H1 (cell line): ENCODE measurements at regions of chr7 and their contacts with region 1.

Region 1: DNA sequence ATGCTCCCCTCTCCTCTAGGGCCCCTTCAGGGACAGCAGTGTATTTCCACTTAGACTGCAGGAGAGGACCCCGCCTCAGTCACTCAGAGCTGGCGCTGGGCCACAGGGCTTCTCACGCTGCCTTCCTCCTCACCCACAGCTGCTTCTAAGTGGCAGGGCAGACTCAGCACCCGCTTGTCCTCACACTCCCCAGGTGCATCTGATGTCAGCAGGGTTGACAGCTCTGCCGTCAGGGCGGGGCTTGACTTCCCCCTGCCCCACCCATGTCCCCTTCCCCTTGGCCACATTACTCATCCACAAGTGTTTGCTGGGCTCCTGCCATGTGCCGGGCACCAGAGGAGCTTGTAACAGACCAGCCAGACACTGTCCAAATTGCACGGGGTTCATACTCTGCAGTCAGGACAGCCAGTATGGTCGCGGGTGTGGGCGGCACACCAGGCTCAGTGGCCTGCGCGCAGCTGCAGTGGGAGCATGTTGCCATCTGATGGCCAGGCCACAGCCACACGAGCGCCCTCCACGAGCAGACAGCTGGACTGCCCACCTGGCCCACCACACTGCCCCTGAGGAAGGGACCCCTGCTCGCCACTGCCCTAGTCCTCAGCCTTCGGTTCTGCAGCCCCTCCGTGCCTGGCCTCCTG is 29.3 kb upstream of the TTYH3 start:
- DNase-seq: no peak
- H3K4me3 ChIP-seq: no peak overlapping the region
- H3K27ac ChIP-seq: no peak overlapping the region
- H3K4me1 ChIP-seq: peaks cover 0 to 7% (median 1%) of the 10 kb centered on the region in 4 experiments; a peak in 3 of 7 replicates
- H3K27me3 ChIP-seq: no peaks in the 10 kb centered on the region
- CTCF ChIP-seq: no peak
- EP300 ChIP-seq: no peak
- POLR2A ChIP-seq: no peak
- RAD21 ChIP-seq: no peak; a peak in 1 of 4 replicates

Region 2: DNA sequence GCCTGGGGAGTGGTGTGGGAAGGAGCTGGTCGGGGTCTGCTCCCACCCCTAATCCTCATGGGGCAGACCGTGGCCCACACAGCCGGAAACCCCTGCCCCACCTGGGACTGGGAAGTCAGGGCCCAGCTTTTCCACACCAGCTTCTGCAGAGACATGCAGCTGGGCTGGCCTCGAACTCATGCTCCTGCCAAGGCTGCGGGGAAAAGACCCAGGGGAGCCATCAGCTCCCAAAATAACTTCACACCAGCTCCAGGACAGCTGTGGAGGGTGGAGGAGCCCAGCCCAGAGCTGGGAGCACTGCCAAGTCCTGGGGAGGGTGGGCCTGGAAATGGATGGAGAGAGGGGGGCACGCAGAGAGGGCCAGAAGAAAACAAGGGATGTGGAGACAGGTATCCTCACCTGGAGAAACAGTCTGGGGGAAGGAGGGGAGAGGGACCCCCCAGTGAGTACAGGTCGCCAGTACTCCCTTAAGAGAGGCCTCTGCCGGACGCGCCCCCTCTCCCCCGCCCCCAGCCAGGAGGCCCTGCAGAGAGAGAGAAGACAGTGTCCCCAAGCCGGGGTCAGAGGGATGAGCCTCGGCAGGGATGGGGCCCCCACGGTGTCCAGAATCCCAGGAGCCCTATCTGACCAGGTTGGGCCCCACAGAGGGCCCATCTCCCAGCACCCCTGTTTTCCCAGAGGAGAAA is 114.8 kb before region 1 on chr7:
- CTCF ChIA-PET with region 1: no interaction called
- POLR2A ChIA-PET with region 1: no interaction called
- DNase-seq: no peak
- H3K4me3 ChIP-seq: no peak overlapping the region
- H3K27ac ChIP-seq: no peak overlapping the region
- H3K4me1 ChIP-seq: no peaks in the 10 kb centered on the region
- H3K27me3 ChIP-seq: no peaks in the 10 kb centered on the region
- CTCF ChIP-seq: no peak
- EP300 ChIP-seq: no peak
- POLR2A ChIP-seq: no peak
- RAD21 ChIP-seq: no peak

Region 3: DNA sequence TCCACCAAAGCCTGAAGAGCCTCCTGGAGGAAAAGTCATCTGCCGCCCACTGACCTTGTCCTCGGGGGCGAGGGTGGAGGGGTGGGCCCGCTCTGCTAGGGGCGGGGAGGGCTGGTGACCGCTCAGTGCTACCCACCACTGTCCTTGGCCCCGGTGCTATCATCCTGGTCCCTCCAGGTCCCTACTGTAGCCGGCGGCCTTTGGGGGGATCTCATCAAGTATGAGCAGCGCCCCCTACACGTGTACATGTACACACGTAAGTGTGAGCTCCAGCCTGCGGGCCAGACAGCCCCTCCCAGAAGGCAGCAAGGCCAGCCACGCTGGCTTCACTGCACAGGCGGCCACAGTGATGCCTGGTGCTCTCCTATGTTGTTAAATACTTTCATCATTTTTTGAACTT is 48.8 kb after region 1 on chr7:
- CTCF ChIA-PET with region 1: interaction called, 14 read pairs
- POLR2A ChIA-PET with region 1: interaction called, 3 read pairs
- DNase-seq: no peak
- H3K4me3 ChIP-seq: no peak overlapping the region
- H3K27ac ChIP-seq: no peak overlapping the region
- H3K4me1 ChIP-seq: peaks cover 0 to 7% (median 4%) of the 10 kb centered on the region in 4 experiments; a peak in 6 of 7 replicates
- H3K27me3 ChIP-seq: no peaks in the 10 kb centered on the region; a peak in 2 of 7 replicates
- CTCF ChIP-seq: peak in 1 of 3 experiments; percentile 21; a peak in 1 of 4 replicates
- EP300 ChIP-seq: no peak
- POLR2A ChIP-seq: no peak
- RAD21 ChIP-seq: peak in 1 of 2 experiments; percentile 33; a peak in 2 of 4 replicates